Heart right ventricle (tissue), 16 donors: ENCODE measurements at regions of chr7 and their contacts with region 1.

Region 1: DNA sequence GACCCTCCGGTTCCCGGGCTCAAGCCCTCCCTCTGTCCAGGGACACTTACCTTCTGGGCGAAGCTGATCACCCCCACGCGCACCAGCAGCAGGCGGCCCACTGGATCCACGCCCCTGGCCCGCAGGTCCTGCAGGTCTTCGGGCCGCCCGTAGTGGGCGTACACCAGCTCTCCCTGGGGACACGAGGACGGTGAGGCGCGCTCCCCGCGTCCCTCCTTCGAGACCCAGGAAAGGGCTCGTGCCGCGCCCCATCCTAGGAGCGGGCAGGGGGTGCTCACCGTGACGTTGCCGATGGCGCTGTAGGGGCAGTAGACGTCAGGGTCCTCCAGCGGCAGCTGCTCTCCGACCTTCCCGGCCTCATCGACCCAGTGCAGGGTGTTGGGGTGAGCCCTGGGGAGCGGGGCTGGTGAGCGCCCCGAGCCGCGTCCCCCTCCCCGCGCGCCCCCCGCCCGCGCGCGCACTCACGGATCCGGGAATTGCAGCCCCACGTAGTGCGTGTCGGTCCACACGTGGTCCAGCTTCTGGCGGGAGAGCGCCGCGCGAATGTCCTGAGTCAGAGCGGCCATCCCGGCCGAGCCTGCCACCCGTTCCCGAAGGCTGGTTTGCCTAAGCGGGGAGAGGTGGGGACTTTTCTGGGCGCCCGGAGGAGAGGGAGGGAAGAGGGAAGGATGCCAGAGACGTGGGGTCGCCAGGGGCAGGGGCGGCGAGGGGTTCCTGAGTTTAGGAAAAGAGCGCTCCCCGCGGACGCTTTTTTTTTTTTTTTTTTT is 8.2 kb downstream of the TFR2 start:
- DNase-seq: peak; percentile 19 to 41
- ATAC-seq: peak; percentile 44 to 77 (median 60)
- H3K4me3 ChIP-seq: peak overlapping the region; percentile 36 to 63 (median 52)
- H3K27ac ChIP-seq: peak overlapping the region in 1 of 10 donors; percentile 56
- H3K4me1 ChIP-seq: peaks cover 0 to 13% (median 11%) of the 10 kb centered on the region in 9 donors
- H3K27me3 ChIP-seq: peaks cover 0 to 48% (median 25%) of the 10 kb centered on the region in 7 donors
- CTCF ChIP-seq: peak in 6 of 9 donors; percentile 12 to 38 (median 24)

Region 2: DNA sequence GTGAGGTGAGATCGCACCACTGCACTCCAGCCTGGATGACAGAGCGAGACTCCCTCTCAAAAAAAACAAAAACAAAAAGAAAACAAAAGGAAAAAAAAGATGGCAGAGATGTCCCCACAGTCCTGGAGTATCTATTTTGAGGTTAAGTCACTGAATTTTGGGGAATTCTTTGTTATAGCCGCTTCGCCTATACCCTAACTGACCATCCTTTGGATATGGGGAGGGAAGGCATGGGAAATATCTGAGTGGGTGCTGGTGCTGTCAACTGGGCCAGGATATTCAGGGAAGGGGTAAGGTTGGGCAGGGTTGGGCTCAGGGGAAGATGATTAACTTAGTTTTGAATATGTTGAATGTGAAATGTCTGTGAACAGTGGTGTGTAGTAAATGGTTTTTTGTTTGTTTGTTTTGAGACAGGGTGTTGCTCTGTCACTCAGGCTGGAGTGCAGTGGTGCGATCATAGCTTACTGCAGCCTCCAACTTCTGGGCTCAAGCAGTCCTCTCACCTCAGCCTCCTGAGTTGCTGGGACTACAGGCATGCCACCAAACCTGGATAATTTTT is 32.1 kb after region 1 on chr7:
- intact Hi-C with region 1: loop called in 2 of 10 experiments (anchors 5 kb)
- DNase-seq: no peak
- ATAC-seq: no peak
- H3K4me3 ChIP-seq: no peak overlapping the region
- H3K27ac ChIP-seq: no peak overlapping the region
- H3K4me1 ChIP-seq: no peaks in the 10 kb centered on the region
- H3K27me3 ChIP-seq: peaks cover 0 to 20% (median 5%) of the 10 kb centered on the region in 7 donors
- CTCF ChIP-seq: no peak

Region 3: DNA sequence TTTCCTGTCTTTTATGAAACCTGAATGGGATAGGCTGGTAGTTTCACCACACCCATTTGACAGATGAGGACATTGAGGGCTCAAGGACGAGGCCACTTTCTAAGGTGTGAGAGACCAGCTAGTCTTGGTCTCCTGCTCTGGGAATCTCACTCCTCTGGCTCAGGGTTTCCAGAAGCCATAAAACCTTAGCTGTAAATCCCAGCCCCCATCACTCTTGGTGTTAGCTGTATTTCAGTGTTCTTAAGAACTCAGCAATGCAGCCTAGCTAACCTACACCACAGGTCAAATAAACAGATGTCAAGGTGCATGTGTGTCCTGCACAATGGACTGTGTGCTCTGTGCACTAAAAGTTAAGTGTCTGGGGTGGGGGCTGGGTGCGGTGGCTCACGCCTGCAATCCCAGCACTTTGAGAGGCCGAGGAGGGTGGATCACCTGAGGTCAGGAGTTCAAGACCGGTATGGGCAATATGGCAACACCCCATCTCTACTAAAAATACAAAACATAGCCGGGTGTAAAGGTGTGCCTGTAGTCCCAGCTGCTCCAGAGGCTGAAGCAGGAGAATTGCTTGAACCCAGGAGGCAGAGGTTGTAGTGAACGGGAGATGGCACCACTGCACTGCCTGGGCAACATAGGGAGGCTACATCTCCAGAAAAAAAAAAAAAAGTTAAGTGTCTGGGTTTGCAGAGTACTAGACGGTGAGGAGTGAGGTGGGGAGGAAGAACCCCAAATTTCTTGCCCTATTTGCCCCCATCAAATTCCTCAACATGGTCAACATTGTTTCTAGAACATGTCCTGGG is 86.6 kb after region 1 on chr7:
- intact Hi-C with region 1: no loop called
- DNase-seq: no peak
- ATAC-seq: no peak
- H3K4me3 ChIP-seq: no peak overlapping the region
- H3K27ac ChIP-seq: no peak overlapping the region
- H3K4me1 ChIP-seq: peaks cover 0 to 12% (median 0%) of the 10 kb centered on the region in 9 donors
- H3K27me3 ChIP-seq: peaks cover 4 to 61% (median 53%) of the 10 kb centered on the region in 7 donors
- CTCF ChIP-seq: no peak

Region 4: GRCh38 chr7:100779359-100779758 is 146.2 kb after region 1 on chr7:
- intact Hi-C with region 1: no loop called
- DNase-seq: no peak
- ATAC-seq: no peak
- H3K4me3 ChIP-seq: no peak overlapping the region
- H3K27ac ChIP-seq: no peak overlapping the region
- H3K4me1 ChIP-seq: no peaks in the 10 kb centered on the region
- H3K27me3 ChIP-seq: peaks cover 0 to 48% (median 18%) of the 10 kb centered on the region in 7 donors
- CTCF ChIP-seq: no peak